CD4-positive, alpha-beta T cell (primary cell): ENCODE measurements at regions of chr10 and their contacts with region 1.

Region 1: GRCh38 chr10:78302989-78303854 is 269.6 kb downstream of the RPS24 start:
- DNase-seq: peak; percentile 89 to 98 (median 96)
- ATAC-seq: peak; percentile 86
- H3K4me3 ChIP-seq: peak overlapping the region; percentile 84
- H3K4me3 Mint-ChIP-seq: peak overlapping the region; percentile 93
- H3K27ac ChIP-seq: peak overlapping the region; percentile 83 to 91
- H3K27ac Mint-ChIP-seq: peak overlapping the region; percentile 90
- H3K4me1 ChIP-seq: peaks cover 26% of the 10 kb centered on the region
- H3K4me1 Mint-ChIP-seq: peaks cover 18% of the 10 kb centered on the region
- H3K27me3 ChIP-seq: no peaks in the 10 kb centered on the region
- H3K27me3 Mint-ChIP-seq: no peaks in the 10 kb centered on the region
- CTCF ChIP-seq: peak; percentile 82

Region 2: DNA sequence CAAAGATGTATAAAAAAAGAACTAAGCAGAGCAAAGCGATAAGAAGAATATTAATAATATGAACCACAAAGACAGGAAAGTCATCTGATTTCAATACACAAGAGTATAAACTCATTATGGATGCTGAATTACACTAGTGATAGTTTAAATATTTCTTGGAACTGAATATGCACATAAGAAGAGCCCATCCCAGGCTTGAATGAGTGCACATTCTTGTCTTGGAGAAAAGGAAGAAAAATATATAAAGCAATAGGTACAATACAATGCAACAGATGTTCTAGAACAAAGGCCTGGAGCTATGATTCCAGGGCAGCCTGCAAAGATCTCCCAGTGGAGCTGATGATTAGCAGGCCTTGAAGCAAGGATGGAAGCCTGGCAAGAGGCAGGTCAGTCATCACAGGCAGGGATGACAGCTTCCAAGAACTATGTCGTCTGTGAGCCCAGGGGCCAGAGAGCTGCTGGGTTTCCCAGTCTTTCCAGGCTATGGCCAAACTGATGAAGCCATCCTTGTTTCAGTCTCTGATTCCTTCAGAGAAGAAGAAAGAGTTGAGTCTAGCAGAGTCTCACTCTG is 943.2 kb before region 1 on chr10:
- CTCF ChIA-PET with region 1: no interaction called
- POLR2A ChIA-PET with region 1: no interaction called
- intact Hi-C with region 1: no loop called
- DNase-seq: no peak
- ATAC-seq: no peak
- H3K4me3 ChIP-seq: no peak overlapping the region
- H3K4me3 Mint-ChIP-seq: no peak overlapping the region
- H3K27ac ChIP-seq: no peak overlapping the region
- H3K27ac Mint-ChIP-seq: no peak overlapping the region
- H3K4me1 ChIP-seq: no peaks in the 10 kb centered on the region
- H3K4me1 Mint-ChIP-seq: no peaks in the 10 kb centered on the region
- H3K27me3 ChIP-seq: no peaks in the 10 kb centered on the region
- H3K27me3 Mint-ChIP-seq: peaks cover 5% of the 10 kb centered on the region
- CTCF ChIP-seq: no peak

Region 3: DNA sequence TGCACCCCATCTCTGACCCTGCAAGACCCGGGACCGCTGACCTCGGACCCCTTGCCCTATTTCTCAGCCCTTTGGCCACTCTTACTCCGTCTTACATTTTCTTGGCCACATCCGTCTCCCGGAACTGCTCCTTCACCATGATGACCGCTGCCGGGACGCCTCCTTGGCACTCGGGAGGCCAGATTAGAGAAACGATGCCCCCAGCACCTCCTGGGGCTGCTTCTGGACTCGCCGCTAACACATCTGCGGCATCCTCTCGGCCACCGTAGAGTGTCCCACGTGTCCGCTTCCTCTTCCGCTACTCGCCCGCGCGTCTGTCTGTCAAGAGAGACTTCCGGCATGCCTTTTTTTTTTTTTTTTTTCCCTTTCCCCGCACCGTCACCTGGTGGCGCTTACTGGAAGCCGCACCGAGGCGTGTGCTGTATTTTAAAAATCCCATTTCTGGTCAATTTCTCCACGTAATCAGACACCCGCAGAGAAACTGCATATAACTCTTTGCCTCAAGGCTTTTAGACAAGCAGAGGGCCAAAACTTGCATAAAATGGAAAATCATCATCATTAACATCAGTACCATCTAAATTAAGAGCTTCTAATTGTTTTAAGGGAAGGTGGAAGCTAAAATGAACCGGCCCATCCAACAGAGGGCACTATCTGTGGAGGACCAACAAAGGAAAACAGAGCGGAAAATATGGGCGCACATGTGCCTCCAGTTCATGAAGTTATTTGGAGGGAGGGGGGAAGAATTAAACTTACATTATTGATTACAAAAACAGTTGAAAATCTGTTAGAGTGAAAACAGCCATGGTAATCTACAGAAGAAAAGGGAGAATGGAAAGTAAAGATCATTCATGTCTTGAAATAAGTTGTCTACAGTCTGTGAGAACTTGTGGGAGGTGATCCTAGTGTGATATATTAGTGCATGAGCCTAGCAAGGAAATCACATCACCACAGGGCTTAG is 273.7 kb before region 1 on chr10 and contains the start of gene POLR3A:
- CTCF ChIA-PET with region 1: no interaction called
- POLR2A ChIA-PET with region 1: interaction called, 3 read pairs
- intact Hi-C with region 1: loop called in 1 of 2 experiments (anchors 5 kb)
- DNase-seq: peak; percentile 83 to 97 (median 90)
- ATAC-seq: peak; percentile 58
- H3K4me3 ChIP-seq: peak within 1 kb of the TSS; percentile 99
- H3K4me3 Mint-ChIP-seq: peak within 1 kb of the TSS; percentile 97
- H3K27ac ChIP-seq: peak within 1 kb of the TSS; percentile 38 to 61
- H3K27ac Mint-ChIP-seq: peak within 1 kb of the TSS; percentile 83
- H3K4me1 ChIP-seq: peaks cover 33% of the 10 kb centered on the region
- H3K4me1 Mint-ChIP-seq: peaks cover 48% of the 10 kb centered on the region
- H3K27me3 ChIP-seq: no peaks in the 10 kb centered on the region
- H3K27me3 Mint-ChIP-seq: no peaks in the 10 kb centered on the region
- CTCF ChIP-seq: peak; percentile 72
- total RNA-seq, gene POLR3A: 6.7 to 6.9 TPM

Region 4: GRCh38 chr10:78972947-78973900 is 670.0 kb after region 1 on chr10:
- CTCF ChIA-PET with region 1: no interaction called
- POLR2A ChIA-PET with region 1: no interaction called
- intact Hi-C with region 1: loop called in 1 of 2 experiments (anchors 10 kb)
- DNase-seq: peak; percentile 14 to 86 (median 52)
- ATAC-seq: peak; percentile 69
- H3K4me3 ChIP-seq: peak overlapping the region; percentile 56
- H3K4me3 Mint-ChIP-seq: peak overlapping the region; percentile 91
- H3K27ac ChIP-seq: no peak overlapping the region
- H3K27ac Mint-ChIP-seq: peak overlapping the region; percentile 69
- H3K4me1 ChIP-seq: peaks cover 19% of the 10 kb centered on the region
- H3K4me1 Mint-ChIP-seq: peaks cover 15% of the 10 kb centered on the region
- H3K27me3 ChIP-seq: no peaks in the 10 kb centered on the region
- H3K27me3 Mint-ChIP-seq: no peaks in the 10 kb centered on the region
- CTCF ChIP-seq: no peak

Region 5: DNA sequence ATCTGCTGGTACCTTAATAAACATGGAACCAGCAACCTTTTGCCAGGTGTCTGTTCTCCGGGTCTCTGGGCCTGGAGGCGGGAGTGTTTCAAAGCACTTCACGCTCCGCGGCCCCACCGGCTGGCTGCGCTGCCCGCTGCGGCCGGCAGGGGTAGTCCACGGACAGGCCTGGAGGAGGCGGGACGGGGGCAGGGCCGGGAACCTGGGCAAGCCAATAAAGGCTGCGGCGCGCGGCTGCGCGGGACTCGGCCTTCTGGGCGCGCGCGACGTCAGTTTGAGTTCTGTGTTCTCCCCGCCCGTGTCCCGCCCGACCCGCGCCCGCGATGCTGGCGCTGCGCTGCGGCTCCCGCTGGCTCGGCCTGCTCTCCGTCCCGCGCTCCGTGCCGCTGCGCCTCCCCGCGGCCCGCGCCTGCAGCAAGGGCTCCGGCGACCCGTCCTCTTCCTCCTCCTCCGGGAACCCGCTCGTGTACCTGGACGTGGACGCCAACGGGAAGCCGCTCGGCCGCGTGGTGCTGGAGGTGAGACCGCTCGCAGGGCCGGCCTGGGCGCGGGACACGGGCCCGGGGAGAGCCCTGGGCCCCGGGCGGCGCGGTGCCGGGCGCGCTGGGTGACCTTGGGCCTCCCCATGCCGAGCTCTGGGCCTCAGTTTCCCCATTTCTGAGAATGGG is 1044.1 kb after region 1 on chr10 and contains the start of gene PPIF:
- CTCF ChIA-PET with region 1: no interaction called
- POLR2A ChIA-PET with region 1: no interaction called
- intact Hi-C with region 1: loop called in 1 of 2 experiments (anchors 10 kb)
- DNase-seq: peak; percentile 81 to 96 (median 90)
- ATAC-seq: peak; percentile 93
- H3K4me3 ChIP-seq: peak within 1 kb of the TSS; percentile 74
- H3K4me3 Mint-ChIP-seq: peak within 1 kb of the TSS; percentile 85
- H3K27ac ChIP-seq: peak within 1 kb of the TSS; percentile 69 to 73
- H3K27ac Mint-ChIP-seq: peak within 1 kb of the TSS; percentile 81
- H3K4me1 ChIP-seq: peaks cover 58% of the 10 kb centered on the region
- H3K4me1 Mint-ChIP-seq: peaks cover 27% of the 10 kb centered on the region
- H3K27me3 ChIP-seq: no peaks in the 10 kb centered on the region
- H3K27me3 Mint-ChIP-seq: no peaks in the 10 kb centered on the region
- CTCF ChIP-seq: peak; percentile 92
- total RNA-seq, gene PPIF: 42.4 to 42.7 TPM

Region 6: GRCh38 chr10:79445141-79445976 is 1142.1 kb after region 1 on chr10 and contains the start of gene ZCCHC24:
- CTCF ChIA-PET with region 1: no interaction called
- POLR2A ChIA-PET with region 1: no interaction called
- intact Hi-C with region 1: loop called in 1 of 2 experiments (anchors 5 kb)
- DNase-seq: peak; percentile 87 to 98 (median 93)
- ATAC-seq: peak; percentile 91
- H3K4me3 ChIP-seq: peak within 1 kb of the TSS; percentile 58
- H3K4me3 Mint-ChIP-seq: peak within 1 kb of the TSS; percentile 94
- H3K27ac ChIP-seq: no peak within 1 kb of the TSS
- H3K27ac Mint-ChIP-seq: peak within 1 kb of the TSS; percentile 83
- H3K4me1 ChIP-seq: peaks cover 33% of the 10 kb centered on the region
- H3K4me1 Mint-ChIP-seq: peaks cover 32% of the 10 kb centered on the region
- H3K27me3 ChIP-seq: no peaks in the 10 kb centered on the region
- H3K27me3 Mint-ChIP-seq: no peaks in the 10 kb centered on the region
- CTCF ChIP-seq: no peak
- total RNA-seq, gene ZCCHC24: 0.67 to 0.85 TPM

Region 7: DNA sequence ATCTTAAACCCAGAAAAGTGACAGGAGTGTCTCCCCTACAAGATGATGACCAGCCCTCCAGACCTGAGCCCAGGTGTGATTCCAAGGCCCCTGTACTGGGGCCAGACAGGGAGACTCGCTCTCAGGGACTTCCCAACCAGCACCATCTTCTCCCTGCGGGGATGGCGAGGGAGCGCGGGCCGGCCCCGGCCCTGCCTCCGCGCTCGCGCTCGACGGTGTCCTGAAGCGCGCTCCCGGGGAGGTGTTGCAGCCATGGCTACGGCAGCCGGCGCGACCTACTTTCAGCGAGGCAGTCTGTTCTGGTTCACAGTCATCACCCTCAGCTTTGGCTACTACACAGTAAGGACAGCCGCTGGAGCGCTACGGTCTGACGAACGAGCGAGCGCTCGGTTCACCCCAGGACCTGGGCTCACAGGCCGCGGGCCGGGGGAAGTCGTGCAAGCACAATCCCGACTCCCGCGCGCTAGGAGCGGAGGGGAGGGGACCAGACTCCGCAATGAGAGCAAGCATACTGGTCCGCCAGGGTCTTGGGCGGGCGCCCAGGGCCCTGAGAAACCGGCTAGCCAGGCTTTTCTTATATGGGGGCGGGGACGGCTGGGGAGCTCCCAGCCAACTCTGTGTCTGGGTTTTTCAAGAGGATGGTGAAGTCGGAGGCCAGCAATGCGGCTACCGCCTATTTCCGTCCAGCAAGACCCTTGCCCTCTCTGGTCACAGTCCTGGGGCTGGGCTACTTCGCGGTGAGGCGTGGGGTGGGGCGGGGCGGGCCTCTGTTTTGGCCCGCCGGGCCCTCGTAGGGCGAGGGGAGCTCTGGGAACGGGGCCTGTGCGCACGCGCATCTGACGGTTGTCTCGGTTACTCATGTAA is 1775.5 kb after region 1 on chr10 and contains the start of gene TMEM254:
- CTCF ChIA-PET with region 1: no interaction called
- POLR2A ChIA-PET with region 1: no interaction called
- intact Hi-C with region 1: loop called in 1 of 2 experiments (anchors 10 kb)
- DNase-seq: peak; percentile 77 to 94 (median 88)
- ATAC-seq: peak; percentile 76
- H3K4me3 ChIP-seq: peak within 1 kb of the TSS; percentile 99
- H3K4me3 Mint-ChIP-seq: peak within 1 kb of the TSS; percentile 85
- H3K27ac ChIP-seq: peak within 1 kb of the TSS; percentile 86 to 90
- H3K27ac Mint-ChIP-seq: peak within 1 kb of the TSS; percentile 74
- H3K4me1 ChIP-seq: peaks cover 17% of the 10 kb centered on the region
- H3K4me1 Mint-ChIP-seq: peaks cover 30% of the 10 kb centered on the region
- H3K27me3 ChIP-seq: no peaks in the 10 kb centered on the region
- H3K27me3 Mint-ChIP-seq: no peaks in the 10 kb centered on the region
- CTCF ChIP-seq: no peak
- total RNA-seq, gene TMEM254: 4.0 to 5.6 TPM

Region 8: DNA sequence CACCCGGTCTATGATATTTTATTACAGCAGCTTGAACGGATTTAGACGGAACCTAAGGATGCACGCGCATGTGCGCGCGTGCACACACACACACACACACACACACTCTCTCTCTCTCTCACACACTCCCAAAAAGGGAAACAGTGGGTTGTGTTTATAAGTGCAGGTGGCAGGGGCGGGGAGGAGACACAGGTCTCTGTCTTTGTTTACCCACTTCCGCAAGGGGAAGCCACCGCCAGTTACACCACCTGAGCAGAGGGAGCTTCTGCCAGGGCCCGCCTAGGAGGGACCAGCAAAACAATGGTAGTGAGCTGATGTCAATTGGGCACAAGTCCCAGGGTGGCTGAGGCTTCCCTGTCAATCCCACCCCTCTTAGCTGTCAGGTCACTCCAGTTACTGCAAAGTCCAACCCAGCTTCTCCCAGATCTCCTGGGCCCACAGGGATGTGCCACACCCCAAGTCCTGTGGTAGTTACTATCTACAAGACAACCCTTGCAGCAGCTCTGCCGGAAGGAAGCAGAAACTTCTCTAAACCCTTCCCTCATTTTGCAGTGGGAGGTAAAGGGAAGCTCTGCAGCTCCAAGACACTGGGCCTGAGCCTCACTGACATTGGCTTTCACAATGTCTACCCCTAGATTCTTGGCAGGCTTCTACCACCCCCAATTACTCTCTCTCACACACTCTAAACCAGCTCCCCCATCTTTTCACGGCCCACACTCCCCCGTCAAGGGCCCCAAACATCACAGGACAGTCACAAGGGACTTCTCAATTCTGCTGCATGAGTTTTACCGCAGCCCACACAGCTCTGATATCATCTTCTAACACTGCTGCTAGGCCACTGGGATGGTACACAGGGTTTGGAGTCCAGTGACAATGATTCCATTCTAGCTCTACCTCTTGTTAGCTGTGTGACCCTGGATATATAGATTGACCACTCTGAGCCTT is 1884.5 kb after region 1 on chr10:
- CTCF ChIA-PET with region 1: no interaction called
- POLR2A ChIA-PET with region 1: no interaction called
- intact Hi-C with region 1: loop called in 1 of 2 experiments (anchors 5 kb)
- DNase-seq: peak; percentile 72 to 96 (median 83)
- ATAC-seq: peak; percentile 93
- H3K4me3 ChIP-seq: peak overlapping the region; percentile 42
- H3K4me3 Mint-ChIP-seq: peak overlapping the region; percentile 80
- H3K27ac ChIP-seq: peak overlapping the region; percentile 76 to 84
- H3K27ac Mint-ChIP-seq: peak overlapping the region; percentile 91
- H3K4me1 ChIP-seq: peaks cover 85% of the 10 kb centered on the region
- H3K4me1 Mint-ChIP-seq: peaks cover 90% of the 10 kb centered on the region
- H3K27me3 ChIP-seq: no peaks in the 10 kb centered on the region
- H3K27me3 Mint-ChIP-seq: no peaks in the 10 kb centered on the region
- CTCF ChIP-seq: no peak